Ovary (tissue), 10 donors: ENCODE measurements at regions of chr6 and their contacts with region 1.

Region 1: DNA sequence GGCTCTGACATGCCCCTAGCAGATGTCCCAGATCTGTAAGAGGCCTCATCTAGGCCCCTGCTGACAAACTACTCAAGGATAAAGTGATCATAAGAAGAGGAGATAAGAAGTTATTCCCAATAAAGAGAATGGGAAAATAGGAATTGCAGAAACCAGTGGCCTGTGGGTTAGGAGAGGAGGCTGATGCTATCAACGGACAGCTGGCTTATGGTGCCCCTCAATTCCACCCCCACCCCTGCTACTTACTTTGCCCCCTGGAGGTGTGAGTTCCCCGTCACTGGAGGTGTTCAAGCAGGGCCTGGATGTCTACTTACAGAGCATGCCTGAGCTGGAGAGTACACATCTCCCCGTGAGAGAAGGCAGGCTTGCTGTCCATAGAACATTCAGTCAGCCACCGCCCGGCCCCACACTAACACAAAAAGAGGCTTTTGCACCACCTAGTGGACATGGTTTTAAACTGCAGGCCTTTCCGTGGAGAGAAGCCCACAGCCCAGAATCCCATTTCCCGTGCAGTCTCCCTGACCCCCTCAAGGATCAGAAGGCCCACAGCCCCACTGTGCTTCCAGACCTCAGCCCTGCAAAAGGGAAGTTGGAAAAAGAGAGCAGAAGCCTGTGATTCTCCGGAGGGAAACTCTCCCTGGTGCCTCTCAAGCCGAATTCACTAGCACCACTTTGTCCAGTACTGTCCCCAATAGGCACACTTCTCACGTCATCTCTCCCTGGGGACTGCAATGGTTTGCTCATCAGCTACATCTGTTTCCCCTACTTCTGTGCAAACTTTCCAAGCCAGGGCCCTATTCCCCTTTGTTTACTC is 23.8 kb upstream of the BNIP5 start:
- DNase-seq: peak; percentile 72 to 83 (median 81)
- H3K4me3 ChIP-seq: no peak overlapping the region
- H3K27ac ChIP-seq: no peak overlapping the region
- H3K4me1 ChIP-seq: peaks cover 5% of the 10 kb centered on the region
- H3K27me3 ChIP-seq: no peaks in the 10 kb centered on the region
- CTCF ChIP-seq: peak; percentile 55 to 86 (median 84)
- EP300 ChIP-seq: no peak
- POLR2A ChIP-seq: no peak

Region 2: DNA sequence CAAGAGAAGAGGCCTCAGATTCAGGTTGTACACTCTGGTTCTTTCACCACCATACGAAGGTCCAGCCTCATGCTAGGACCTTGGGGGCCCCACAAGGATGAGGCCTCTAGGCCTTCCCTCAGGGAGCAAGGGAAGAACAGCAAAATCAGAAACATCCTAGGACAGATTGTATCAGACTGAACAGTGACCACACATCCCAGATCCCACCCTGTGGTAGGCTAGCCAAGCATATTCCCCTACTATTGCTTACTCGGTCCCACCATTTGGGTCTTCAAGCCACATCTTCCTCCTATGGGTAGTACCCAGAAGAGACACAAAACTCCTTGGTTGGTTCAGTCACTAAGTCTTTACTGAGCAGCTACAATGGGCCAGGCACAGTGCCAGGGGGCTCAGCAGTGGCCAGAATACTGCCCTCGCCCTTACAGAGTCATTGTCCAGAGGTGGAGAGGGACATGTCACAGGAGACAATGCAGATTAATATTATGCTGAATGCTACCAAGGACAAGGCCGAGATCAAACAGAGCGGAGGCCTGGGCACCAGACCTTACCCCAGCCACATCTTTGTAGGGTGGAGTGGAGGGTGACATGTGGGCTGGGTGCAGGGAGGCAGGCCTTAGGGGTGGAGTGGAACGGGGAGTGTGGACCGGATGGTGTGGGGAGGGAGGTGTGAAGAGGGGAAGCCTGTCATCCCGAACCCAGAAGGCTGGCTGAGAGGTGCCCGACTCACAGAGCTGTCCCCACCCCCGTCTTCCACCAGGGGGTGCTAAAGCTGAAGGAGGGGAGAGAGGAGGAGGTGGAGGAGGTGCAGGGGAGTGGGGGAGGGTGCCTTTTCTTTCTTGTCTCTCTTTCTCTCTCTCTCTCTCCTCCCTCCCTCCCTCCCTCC is 236.9 kb before region 1 on chr6:
- intact Hi-C with region 1: loop called in 3 of 4 experiments (anchors 5 kb)
- DNase-seq: peak; percentile 63 to 83 (median 79)
- H3K4me3 ChIP-seq: no peak overlapping the region
- H3K27ac ChIP-seq: no peak overlapping the region
- H3K4me1 ChIP-seq: no peaks in the 10 kb centered on the region
- H3K27me3 ChIP-seq: no peaks in the 10 kb centered on the region
- CTCF ChIP-seq: peak; percentile 13 to 43 (median 41)
- EP300 ChIP-seq: no peak
- POLR2A ChIP-seq: no peak

Region 3: DNA sequence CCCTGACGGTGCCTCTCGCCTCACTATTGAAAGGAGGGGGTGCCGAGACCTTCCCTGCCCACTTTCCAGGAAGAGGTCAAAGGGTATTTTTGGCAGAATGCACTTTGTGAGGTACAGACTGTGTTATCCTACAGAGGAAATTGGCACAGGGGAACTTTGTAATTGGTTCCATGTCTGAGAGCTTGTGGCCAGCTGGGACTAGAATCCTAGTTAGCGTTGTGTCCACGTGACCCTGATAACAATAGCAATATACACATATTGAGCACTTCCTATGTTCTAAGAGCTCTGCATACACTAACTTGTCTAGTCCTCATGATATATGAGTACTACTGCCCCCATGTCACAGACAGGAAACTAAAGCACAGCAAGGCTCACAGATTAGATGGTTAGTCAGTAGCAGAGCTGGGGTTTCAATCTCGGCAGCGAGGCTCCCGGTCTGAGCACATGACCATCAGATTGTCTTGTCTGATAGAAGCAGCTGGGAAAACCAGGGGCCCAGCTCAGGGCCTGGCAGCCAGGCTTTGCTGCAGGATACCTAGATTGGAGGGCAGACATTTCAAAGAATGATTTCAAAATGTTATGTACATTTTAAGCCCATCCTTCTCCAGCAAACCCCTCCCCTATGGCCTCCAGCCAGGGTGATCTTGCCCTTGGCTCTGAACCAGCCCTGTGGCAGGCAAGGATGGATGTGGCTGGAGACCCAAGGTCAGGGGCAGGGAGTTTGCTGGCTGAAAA is 228.8 kb before region 1 on chr6:
- intact Hi-C with region 1: loop called in 1 of 4 experiments (anchors 5 kb)
- DNase-seq: peak; percentile 40 to 80 (median 77)
- H3K4me3 ChIP-seq: peak overlapping the region; percentile 37
- H3K27ac ChIP-seq: no peak overlapping the region
- H3K4me1 ChIP-seq: peaks cover 14% of the 10 kb centered on the region
- H3K27me3 ChIP-seq: no peaks in the 10 kb centered on the region
- CTCF ChIP-seq: no peak
- EP300 ChIP-seq: no peak
- POLR2A ChIP-seq: no peak

Region 4: GRCh38 chr6:36302227-36302976 is 58.0 kb before region 1 on chr6:
- intact Hi-C with region 1: loop called (anchors 2 to 5 kb)
- DNase-seq: peak; percentile 82 to 91 (median 83)
- H3K4me3 ChIP-seq: no peak overlapping the region
- H3K27ac ChIP-seq: no peak overlapping the region
- H3K4me1 ChIP-seq: peaks cover 6% of the 10 kb centered on the region
- H3K27me3 ChIP-seq: no peaks in the 10 kb centered on the region
- CTCF ChIP-seq: peak; percentile 87 to 93 (median 90)
- EP300 ChIP-seq: no peak
- POLR2A ChIP-seq: no peak